PC-9 (cell line): ENCODE measurements at regions of chr14 and their contacts with region 1.

Region 1: DNA sequence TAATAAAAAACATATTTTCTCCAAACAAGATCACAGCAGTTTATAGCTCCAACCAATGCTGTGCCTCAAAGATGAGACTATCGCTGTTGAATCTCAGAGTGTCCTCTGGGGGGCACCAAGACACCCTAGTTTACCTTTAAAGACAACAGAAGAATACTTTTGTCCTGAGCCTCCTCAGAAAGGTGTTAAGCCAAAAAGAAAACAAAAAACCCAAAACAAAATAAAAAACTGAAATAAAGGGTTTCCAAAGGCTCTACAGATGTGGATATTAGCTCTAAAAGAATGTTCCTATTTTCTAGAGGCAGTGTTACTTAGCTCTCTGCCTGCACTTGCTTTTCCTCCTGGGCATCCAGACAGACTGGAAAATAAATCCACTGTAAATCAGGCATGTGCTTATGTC is 86.9 kb upstream of the TTC7B start:
- DNase-seq: peak; percentile 18 to 36
- H3K4me3 ChIP-seq: no peak overlapping the region
- H3K27ac ChIP-seq: no peak overlapping the region
- H3K4me1 ChIP-seq: no peaks in the 10 kb centered on the region
- H3K27me3 ChIP-seq: no peaks in the 10 kb centered on the region
- CTCF ChIP-seq: peak; percentile 75

Region 2: DNA sequence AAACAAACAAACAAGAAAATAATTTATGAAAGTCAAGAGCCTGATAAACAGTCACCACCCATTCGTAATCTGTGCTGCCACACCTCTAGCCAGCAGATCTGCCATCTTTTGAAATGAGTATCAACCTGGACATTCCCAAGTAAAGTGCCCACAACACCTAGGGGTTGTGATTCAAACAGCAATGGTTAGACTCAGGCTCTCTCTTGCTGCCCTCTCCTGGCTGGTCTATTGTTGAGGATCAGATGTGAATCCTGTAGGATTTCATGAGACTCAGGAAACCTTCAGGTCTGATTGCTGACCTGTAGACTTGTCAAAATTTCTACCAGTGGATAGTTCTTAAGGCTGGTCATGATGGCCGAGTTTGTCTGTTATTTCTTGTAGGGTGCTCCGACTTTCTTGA is 237.6 kb after region 1 on chr14:
- CTCF ChIA-PET with region 1: no interaction called
- POLR2A ChIA-PET with region 1: no interaction called
- intact Hi-C with region 1: loop called (anchors 1 kb)
- DNase-seq: peak; percentile 3 to 37
- H3K4me3 ChIP-seq: no peak overlapping the region
- H3K27ac ChIP-seq: no peak overlapping the region
- H3K4me1 ChIP-seq: 0 out of 2 replicates have a peak, but pooled peaks cover 5% of the 10 kb centered on the region
- H3K27me3 ChIP-seq: no peaks in the 10 kb centered on the region
- CTCF ChIP-seq: peak; percentile 52

Region 3: GRCh38 chr14:91177073-91178034 is 274.3 kb after region 1 on chr14:
- CTCF ChIA-PET with region 1: interaction called, 7 read pairs
- POLR2A ChIA-PET with region 1: interaction called, 3 read pairs
- intact Hi-C with region 1: loop called (anchors 1 kb)
- DNase-seq: peak; percentile 10 to 51
- H3K4me3 ChIP-seq: no peak overlapping the region
- H3K27ac ChIP-seq: no peak overlapping the region
- H3K4me1 ChIP-seq: no peaks in the 10 kb centered on the region
- H3K27me3 ChIP-seq: no peaks in the 10 kb centered on the region
- CTCF ChIP-seq: peak; percentile 79

Region 4: DNA sequence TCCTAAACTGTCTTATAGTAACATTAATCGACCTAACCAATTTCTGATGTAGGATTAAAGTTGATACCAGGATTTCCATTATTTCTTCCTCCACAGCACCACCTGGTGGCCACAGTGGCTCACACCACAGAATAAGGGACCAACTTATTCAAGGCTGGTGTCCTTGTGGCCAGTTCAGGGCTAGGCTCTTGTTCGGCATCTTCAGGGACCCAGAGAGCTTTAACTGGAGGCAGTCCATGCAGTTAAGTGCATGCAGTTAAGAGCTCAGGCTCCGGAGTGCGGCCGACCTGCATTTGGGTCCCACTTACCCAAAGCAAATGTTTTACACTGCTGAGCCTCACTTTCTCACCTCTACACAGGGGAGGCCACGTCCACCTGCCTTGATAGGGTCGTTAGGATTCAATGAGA is 383.4 kb after region 1 on chr14:
- CTCF ChIA-PET with region 1: no interaction called
- POLR2A ChIA-PET with region 1: no interaction called
- intact Hi-C with region 1: loop called (anchors 10 kb)
- DNase-seq: peak in 1 of 2 experiments; percentile 26
- H3K4me3 ChIP-seq: no peak overlapping the region
- H3K27ac ChIP-seq: no peak overlapping the region
- H3K4me1 ChIP-seq: no peaks in the 10 kb centered on the region
- H3K27me3 ChIP-seq: no peaks in the 10 kb centered on the region
- CTCF ChIP-seq: peak; percentile 82

Region 5: GRCh38 chr14:91685600-91685999 is 782.5 kb after region 1 on chr14:
- CTCF ChIA-PET with region 1: no interaction called
- POLR2A ChIA-PET with region 1: no interaction called
- intact Hi-C with region 1: no loop called
- DNase-seq: no peak
- H3K4me3 ChIP-seq: no peak overlapping the region
- H3K27ac ChIP-seq: no peak overlapping the region
- H3K4me1 ChIP-seq: no peaks in the 10 kb centered on the region
- H3K27me3 ChIP-seq: no peaks in the 10 kb centered on the region
- CTCF ChIP-seq: no peak